ENCODE measurements at regions of chr18 and their contacts with region 1.

Region 1: GRCh38 chr18:46097801-46098615 is at the start of gene ATP5F1A:
- DNase-seq: peak; percentile 88
- H3K4me3 ChIP-seq: peak within 1 kb of the TSS; percentile 79
- H3K27ac ChIP-seq: peak within 1 kb of the TSS; percentile 80
- H3K4me1 ChIP-seq: peaks cover 6% of the 10 kb centered on the region
- H3K27me3 ChIP-seq: no peaks in the 10 kb centered on the region
- CTCF ChIP-seq: no peak
- total RNA-seq, gene ATP5F1A: 479 and 531 TPM in 2 replicates

Region 2: GRCh38 chr18:44779753-44780292 is 1318.2 kb before region 1 on chr18:
- CTCF ChIA-PET with region 1: no interaction called
- POLR2A ChIA-PET with region 1: interaction called, 13 read pairs
- intact Hi-C with region 1: no loop called
- DNase-seq: no peak
- H3K4me3 ChIP-seq: no peak overlapping the region
- H3K27ac ChIP-seq: no peak overlapping the region
- H3K4me1 ChIP-seq: no peaks in the 10 kb centered on the region
- H3K27me3 ChIP-seq: no peaks in the 10 kb centered on the region
- CTCF ChIP-seq: no peak

Region 3: DNA sequence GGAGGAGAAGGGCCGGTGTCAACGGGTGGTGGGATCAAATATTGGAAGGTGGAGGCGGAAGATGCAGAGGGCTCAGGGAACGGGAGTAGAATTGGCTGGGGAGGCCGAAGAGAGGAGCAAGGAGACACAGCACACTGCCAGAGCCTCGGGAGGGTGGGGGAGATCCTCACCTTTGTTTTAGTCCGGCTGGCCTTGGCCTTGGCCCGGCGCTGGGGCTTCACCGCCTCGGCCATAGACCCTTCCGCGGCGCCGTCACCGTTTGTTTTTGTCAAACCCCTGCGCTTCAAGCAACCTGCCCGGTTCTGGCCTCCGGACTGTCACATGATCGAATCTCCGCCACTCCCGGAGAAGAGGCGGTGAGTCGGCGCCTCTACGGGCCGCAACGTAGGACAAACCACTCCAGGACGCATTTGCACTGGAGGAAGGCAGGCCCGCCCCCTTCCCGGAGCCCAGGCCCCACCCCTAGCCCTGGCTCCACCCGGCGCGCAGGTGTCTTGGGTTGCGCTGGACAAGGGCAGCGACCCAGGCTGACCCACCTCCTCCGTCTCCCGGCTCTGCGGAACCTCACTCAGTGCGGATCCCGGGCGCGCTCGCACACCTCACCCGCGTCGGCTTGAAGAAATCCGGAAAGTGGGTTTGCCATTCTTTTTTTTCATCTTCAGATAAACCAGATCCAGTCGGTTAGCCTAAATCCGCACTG is 130.9 kb before region 1 on chr18 and contains the start of gene EPG5:
- CTCF ChIA-PET with region 1: no interaction called
- POLR2A ChIA-PET with region 1: interaction called, 10 read pairs
- intact Hi-C with region 1: no loop called
- DNase-seq: peak; percentile 95
- H3K4me3 ChIP-seq: peak within 1 kb of the TSS; percentile 96
- H3K27ac ChIP-seq: peak within 1 kb of the TSS; percentile 69
- H3K4me1 ChIP-seq: no peaks in the 10 kb centered on the region
- H3K27me3 ChIP-seq: no peaks in the 10 kb centered on the region
- CTCF ChIP-seq: no peak
- total RNA-seq, gene EPG5: 15.2 and 16.7 TPM in 2 replicates

Region 4: GRCh38 chr18:46035696-46036680 is 62.0 kb before region 1 on chr18:
- CTCF ChIA-PET with region 1: no interaction called
- POLR2A ChIA-PET with region 1: interaction called, 24 read pairs
- intact Hi-C with region 1: no loop called
- DNase-seq: no peak
- H3K4me3 ChIP-seq: no peak overlapping the region
- H3K27ac ChIP-seq: no peak overlapping the region
- H3K4me1 ChIP-seq: peaks cover 6% of the 10 kb centered on the region
- H3K27me3 ChIP-seq: no peaks in the 10 kb centered on the region
- CTCF ChIP-seq: no peak

Region 5: DNA sequence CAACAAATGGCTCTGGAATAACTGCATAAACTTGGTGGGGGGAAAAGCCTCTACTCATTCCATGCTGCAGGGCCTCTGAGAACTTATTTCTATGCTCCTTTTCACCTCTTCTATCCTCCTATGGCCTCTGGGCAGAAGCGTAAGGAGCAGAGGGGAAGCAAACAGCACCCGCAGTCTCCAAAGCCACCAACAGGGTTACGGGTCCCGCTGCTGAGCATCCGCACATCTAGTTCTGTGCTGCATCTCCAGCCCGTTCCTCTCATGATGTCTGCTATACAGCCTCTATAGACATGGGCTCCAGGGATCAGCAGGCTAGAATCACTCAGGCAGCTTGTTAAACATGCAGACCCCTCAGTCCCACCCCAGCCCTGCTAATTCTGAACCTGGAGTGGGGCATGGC is 51.9 kb before region 1 on chr18:
- CTCF ChIA-PET with region 1: no interaction called
- POLR2A ChIA-PET with region 1: no interaction called
- intact Hi-C with region 1: no loop called
- DNase-seq: no peak
- H3K4me3 ChIP-seq: no peak overlapping the region
- H3K27ac ChIP-seq: no peak overlapping the region
- H3K4me1 ChIP-seq: no peaks in the 10 kb centered on the region
- H3K27me3 ChIP-seq: no peaks in the 10 kb centered on the region
- CTCF ChIP-seq: no peak

Measured in A673 (cell line).